ENCODE measurements at regions of chr4 and their contacts with region 1.

Region 1: GRCh38 chr4:102430461-102430910 is 70.7 kb upstream of the NFKB1 start:
- DNase-seq: no peak
- H3K4me3 ChIP-seq: peak overlapping the region; percentile 44
- H3K27ac ChIP-seq: peak overlapping the region; percentile 41
- H3K4me1 ChIP-seq: no peaks in the 10 kb centered on the region
- H3K27me3 ChIP-seq: no peaks in the 10 kb centered on the region
- CTCF ChIP-seq: no peak

Region 2: DNA sequence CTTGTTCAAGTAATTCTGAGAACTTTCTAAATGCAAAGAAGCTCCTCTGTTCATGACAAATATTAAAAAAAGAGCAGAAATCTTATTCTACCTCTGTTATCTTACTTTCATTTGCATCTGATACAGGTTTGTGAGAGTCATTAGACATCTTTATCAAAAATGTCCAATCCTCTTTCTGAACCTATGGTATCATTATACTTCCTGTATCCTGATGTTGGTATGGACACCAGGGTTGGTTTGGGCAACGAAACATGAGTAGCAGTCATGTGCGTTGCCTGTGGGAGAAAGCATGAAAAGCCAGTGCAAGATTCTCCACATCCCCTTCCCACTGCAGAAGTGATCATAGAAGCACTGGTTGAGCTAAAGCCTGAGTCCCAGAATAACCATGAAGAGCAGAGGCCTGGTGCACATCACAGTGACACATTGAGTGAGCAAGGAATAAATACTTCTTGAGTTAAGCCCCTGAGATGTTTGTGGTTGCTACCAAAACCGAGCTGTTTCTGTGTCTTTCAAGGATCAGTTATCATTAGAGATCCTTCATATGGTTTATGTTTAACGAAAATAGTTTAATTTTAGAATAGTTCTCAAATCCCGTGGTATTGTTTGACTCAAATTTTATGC is 442.8 kb before region 1 on chr4:
- intact Hi-C with region 1: no loop called
- DNase-seq: no peak
- H3K4me3 ChIP-seq: no peak overlapping the region
- H3K27ac ChIP-seq: no peak overlapping the region
- H3K4me1 ChIP-seq: no peaks in the 10 kb centered on the region
- H3K27me3 ChIP-seq: no peaks in the 10 kb centered on the region
- CTCF ChIP-seq: no peak

Region 3: GRCh38 chr4:102174800-102175199 is 255.7 kb before region 1 on chr4:
- intact Hi-C with region 1: no loop called
- DNase-seq: no peak
- H3K4me3 ChIP-seq: no peak overlapping the region
- H3K27ac ChIP-seq: no peak overlapping the region
- H3K4me1 ChIP-seq: no peaks in the 10 kb centered on the region
- H3K27me3 ChIP-seq: no peaks in the 10 kb centered on the region
- CTCF ChIP-seq: no peak

Region 4: GRCh38 chr4:102234243-102234838 is 196.1 kb before region 1 on chr4:
- intact Hi-C with region 1: no loop called
- DNase-seq: no peak
- H3K4me3 ChIP-seq: no peak overlapping the region
- H3K27ac ChIP-seq: no peak overlapping the region
- H3K4me1 ChIP-seq: no peaks in the 10 kb centered on the region
- H3K27me3 ChIP-seq: no peaks in the 10 kb centered on the region
- CTCF ChIP-seq: no peak

Region 5: DNA sequence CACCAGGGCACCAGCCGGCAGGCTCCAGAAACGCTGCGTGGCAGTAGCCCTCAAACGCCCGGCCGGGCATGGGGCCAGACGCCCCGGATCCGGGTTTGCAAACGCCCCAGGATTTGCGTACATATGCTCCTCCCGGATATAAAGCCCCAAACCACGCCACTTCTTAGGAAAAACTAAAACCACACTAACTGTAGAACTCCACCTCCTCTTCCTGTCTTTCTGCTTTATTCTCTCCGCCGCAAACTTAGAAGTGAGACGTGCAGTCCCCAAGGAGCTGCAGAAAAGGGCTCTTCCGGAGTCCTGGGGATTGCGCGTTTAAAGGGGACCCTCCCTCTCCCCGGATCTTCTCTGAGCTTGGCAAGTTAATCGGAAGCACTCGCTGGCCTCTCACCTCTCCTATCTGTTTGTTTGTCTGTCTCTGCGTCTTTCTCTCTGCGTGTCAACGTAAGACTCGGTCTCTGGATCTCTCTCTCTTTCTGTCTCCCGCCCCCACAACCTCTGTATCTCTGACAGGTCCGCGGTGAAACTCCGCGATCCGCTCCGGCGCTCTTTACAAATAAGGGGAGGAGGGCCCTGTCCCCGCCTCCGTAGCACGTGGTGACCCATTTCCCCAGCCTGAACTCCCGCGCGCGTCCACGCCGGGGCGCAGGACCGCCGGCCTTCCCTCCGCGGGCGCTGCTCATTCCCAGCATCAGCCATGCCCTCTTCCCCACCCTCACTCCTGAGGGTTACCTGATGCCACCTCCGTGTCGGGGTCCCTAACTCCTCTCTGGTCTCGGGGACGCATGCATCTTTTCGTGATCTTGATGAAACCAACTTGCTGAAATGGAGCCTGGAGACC is 85.3 kb before region 1 on chr4 and contains the start of gene SLC39A8:
- intact Hi-C with region 1: loop called (anchors 5 kb)
- DNase-seq: peak; percentile 95
- H3K4me3 ChIP-seq: peak within 1 kb of the TSS; percentile 64
- H3K27ac ChIP-seq: peak within 1 kb of the TSS; percentile 77
- H3K4me1 ChIP-seq: peaks cover 4% of the 10 kb centered on the region
- H3K27me3 ChIP-seq: no peaks in the 10 kb centered on the region
- CTCF ChIP-seq: peak; percentile 84
- total RNA-seq, gene SLC39A8: 75.4 to 104 TPM